ENCODE measurements at regions of chr5 and their contacts with region 1.

Region 1: DNA sequence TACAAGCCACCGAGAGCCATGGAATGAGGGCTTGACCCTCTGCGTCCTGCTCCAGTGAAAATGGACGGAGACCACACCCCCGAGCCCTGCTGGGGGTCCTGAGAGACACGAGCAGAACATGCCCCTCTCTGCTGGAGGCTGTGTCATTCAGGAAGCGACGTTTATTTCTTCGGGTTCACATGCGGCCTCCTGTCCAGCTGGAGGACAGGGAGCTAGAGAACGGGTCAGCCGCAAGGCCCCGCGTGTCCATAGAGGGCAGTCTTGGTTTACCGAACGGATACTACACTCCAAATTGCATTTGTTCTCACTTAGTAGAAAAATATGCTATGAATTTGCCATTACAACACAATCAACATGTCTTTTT is 36.1 kb downstream of the MRPL36 start:
- H3K4me3 Mint-ChIP-seq: no peak overlapping the region
- H3K27ac Mint-ChIP-seq: no peak overlapping the region
- H3K4me1 Mint-ChIP-seq: no peaks in the 10 kb centered on the region
- H3K27me3 Mint-ChIP-seq: peaks cover 19% of the 10 kb centered on the region

Region 2: GRCh38 chr5:1709171-1709803 is 54.2 kb before region 1 on chr5:
- intact Hi-C with region 1: no loop called
- H3K4me3 Mint-ChIP-seq: no peak overlapping the region
- H3K27ac Mint-ChIP-seq: no peak overlapping the region
- H3K4me1 Mint-ChIP-seq: no peaks in the 10 kb centered on the region
- H3K27me3 Mint-ChIP-seq: peaks cover 23% of the 10 kb centered on the region

Region 3: DNA sequence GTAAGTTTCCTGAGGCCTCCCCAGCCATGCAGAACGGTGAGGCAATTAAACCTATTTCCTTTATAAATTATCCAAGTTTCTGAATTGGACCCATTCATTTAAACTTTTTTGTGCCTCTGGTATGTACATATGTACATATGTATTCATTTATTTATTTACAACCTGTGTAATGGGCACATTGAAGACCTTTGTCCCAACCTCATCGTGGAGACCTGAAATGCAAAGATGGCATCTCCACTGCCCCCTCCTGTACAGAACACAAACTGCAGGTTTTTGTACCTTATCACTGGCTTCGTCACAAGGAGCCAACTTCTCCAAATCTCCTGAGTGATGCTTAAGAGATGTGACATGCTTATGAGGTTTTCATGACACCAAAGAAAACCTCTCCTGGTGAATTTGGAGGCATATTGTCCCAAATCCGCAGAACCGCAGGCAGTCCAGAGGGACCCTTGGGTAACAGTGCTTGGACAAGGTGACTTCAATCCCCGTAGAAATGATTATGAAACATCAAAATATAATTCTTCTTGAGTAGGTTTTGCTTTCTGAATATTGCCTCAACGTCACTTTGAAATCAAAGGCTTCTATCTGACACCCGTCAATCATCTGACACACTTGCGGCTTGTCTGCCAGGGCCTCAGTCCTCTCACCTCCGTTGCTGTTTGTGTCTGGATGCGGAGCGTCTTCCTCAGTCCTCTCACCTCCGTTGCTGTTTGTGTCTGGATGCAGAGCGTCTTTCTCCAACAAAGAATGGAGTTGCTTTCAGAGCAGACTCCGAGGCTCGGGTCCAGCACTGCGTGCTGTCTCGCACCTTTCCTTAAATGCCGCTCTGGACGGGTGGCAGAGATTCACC is 254.2 kb after region 1 on chr5:
- intact Hi-C with region 1: loop called (anchors 5 kb)
- H3K4me3 Mint-ChIP-seq: no peak overlapping the region
- H3K27ac Mint-ChIP-seq: no peak overlapping the region
- H3K4me1 Mint-ChIP-seq: no peaks in the 10 kb centered on the region
- H3K27me3 Mint-ChIP-seq: peaks cover 2% of the 10 kb centered on the region

Region 4: GRCh38 chr5:2038321-2039179 is 275.0 kb after region 1 on chr5:
- intact Hi-C with region 1: loop called (anchors 1 kb)
- H3K4me3 Mint-ChIP-seq: peak overlapping the region; percentile 80
- H3K27ac Mint-ChIP-seq: no peak overlapping the region
- H3K4me1 Mint-ChIP-seq: peaks cover 5% of the 10 kb centered on the region
- H3K27me3 Mint-ChIP-seq: peaks cover 19% of the 10 kb centered on the region